ENCODE measurements at regions of chr16 and their contacts with region 1.

Region 1: DNA sequence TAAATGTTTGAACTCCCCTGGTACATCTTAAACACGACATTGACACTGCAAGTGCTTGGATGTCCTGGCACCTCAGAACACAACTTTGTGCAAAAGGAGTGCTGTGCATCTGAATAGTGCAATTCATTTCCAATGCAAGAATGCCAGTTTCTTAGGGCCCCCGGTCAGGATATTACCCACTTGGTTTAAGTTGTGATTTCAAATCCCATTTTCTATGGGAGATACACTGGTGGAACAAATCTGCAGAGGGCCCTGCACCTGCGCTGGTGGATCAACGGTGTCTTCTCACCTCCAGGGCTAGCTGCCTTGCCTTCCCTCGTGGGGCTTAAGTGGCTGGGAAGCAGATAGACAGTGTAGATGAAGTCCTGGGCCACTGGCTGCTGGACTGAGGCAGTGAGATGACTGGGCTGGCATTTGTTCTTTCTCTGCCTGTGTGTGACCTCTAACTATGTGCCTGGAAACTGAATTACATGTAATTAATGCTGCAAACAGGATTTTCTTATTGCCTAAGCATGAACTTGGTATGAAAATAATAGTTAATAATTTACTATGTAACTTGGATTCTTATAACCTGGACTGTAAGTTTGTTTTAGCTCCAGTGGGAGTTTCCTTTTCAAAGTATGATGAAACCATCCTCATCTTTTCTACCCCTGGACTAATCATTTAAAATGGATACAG is 20.9 kb downstream of the HAPSTR1 start:
- DNase-seq: no peak
- ATAC-seq: no peak
- H3K4me3 Mint-ChIP-seq: no peak overlapping the region
- H3K27ac Mint-ChIP-seq: peak overlapping the region; percentile 24
- H3K4me1 Mint-ChIP-seq: peaks cover 89% of the 10 kb centered on the region
- H3K27me3 Mint-ChIP-seq: no peaks in the 10 kb centered on the region
- CTCF ChIP-seq: no peak

Region 2: GRCh38 chr16:9099131-9099625 is 13.1 kb before region 1 on chr16:
- CTCF ChIA-PET with region 1: no interaction called
- POLR2A ChIA-PET with region 1: interaction called, 6 read pairs
- intact Hi-C with region 1: loop called (anchors 2 kb)
- DNase-seq: no peak
- ATAC-seq: peak; percentile 31
- H3K4me3 Mint-ChIP-seq: peak overlapping the region; percentile 73
- H3K27ac Mint-ChIP-seq: peak overlapping the region; percentile 84
- H3K4me1 Mint-ChIP-seq: peaks cover 93% of the 10 kb centered on the region
- H3K27me3 Mint-ChIP-seq: no peaks in the 10 kb centered on the region
- CTCF ChIP-seq: no peak

Region 3: GRCh38 chr16:9176547-9177418 is 64.5 kb after region 1 on chr16:
- CTCF ChIA-PET with region 1: no interaction called
- POLR2A ChIA-PET with region 1: no interaction called
- intact Hi-C with region 1: no loop called
- DNase-seq: no peak
- ATAC-seq: no peak
- H3K4me3 Mint-ChIP-seq: no peak overlapping the region
- H3K27ac Mint-ChIP-seq: no peak overlapping the region
- H3K4me1 Mint-ChIP-seq: no peaks in the 10 kb centered on the region
- H3K27me3 Mint-ChIP-seq: peaks cover 19% of the 10 kb centered on the region
- CTCF ChIP-seq: no peak

Region 4: DNA sequence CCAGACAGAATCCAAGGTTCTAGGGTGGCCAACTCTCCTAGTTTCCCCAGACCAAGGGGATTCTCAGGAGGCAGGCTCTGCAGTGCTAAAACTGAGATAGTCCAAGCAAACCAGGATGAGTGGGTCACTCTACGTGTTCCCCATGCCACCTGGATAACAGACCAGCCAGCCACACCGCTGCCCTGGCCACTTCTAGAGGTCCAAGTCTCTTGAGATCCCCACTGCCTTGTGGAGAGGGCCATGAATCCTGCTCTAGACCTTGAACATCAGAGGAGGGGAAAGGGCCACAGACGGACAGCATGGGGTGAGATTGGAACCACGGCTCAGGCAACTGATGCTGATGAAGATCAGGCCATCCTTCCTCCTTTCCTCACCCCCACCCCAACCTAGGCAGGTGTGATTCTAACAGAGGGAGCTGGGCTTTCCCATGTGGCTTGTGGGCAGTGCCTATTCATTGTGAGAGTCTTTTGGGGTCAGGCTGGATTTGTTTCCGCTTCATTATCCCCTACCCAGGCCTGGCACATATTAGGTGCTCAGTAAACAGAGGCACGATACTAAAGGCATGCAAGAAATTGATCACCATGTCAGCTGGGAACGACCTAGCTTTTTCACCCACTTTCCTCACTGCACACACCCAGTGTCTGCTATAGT is 1723.1 kb after region 1 on chr16:
- CTCF ChIA-PET with region 1: no interaction called
- POLR2A ChIA-PET with region 1: no interaction called
- intact Hi-C with region 1: no loop called
- DNase-seq: no peak
- ATAC-seq: peak; percentile 43
- H3K4me3 Mint-ChIP-seq: no peak overlapping the region
- H3K27ac Mint-ChIP-seq: peak overlapping the region; percentile 31
- H3K4me1 Mint-ChIP-seq: peaks cover 62% of the 10 kb centered on the region
- H3K27me3 Mint-ChIP-seq: no peaks in the 10 kb centered on the region
- CTCF ChIP-seq: no peak

Measured in activated B cell treated with CpG ODN at 0.5 μM for 24 hours (primary cell).